Esophagus squamous epithelium (tissue), 5 donors: ENCODE measurements at regions of chr1 and their contacts with region 1.

Region 1: GRCh38 chr1:115138968-115139367 is 49.7 kb upstream of the TSPAN2 start:
- DNase-seq: peak; percentile 16
- H3K4me3 ChIP-seq: no peak overlapping the region
- H3K27ac ChIP-seq: peak overlapping the region in 1 of 4 donors; percentile 5
- H3K4me1 ChIP-seq: peaks cover 0 to 22% (median 0%) of the 10 kb centered on the region in 3 donors
- H3K27me3 ChIP-seq: peaks cover 0 to 13% (median 0%) of the 10 kb centered on the region in 4 donors
- CTCF ChIP-seq: peak; percentile 72 to 94 (median 86)
- POLR2A ChIP-seq: no peak

Region 2: GRCh38 chr1:115179397-115179835 is 40.4 kb after region 1 on chr1:
- intact Hi-C with region 1: no loop called
- DNase-seq: no peak
- H3K4me3 ChIP-seq: no peak overlapping the region
- H3K27ac ChIP-seq: no peak overlapping the region
- H3K4me1 ChIP-seq: peaks cover 0 to 11% (median 0%) of the 10 kb centered on the region in 3 donors
- H3K27me3 ChIP-seq: no peaks in the 10 kb centered on the region
- CTCF ChIP-seq: no peak
- POLR2A ChIP-seq: no peak

Region 3: DNA sequence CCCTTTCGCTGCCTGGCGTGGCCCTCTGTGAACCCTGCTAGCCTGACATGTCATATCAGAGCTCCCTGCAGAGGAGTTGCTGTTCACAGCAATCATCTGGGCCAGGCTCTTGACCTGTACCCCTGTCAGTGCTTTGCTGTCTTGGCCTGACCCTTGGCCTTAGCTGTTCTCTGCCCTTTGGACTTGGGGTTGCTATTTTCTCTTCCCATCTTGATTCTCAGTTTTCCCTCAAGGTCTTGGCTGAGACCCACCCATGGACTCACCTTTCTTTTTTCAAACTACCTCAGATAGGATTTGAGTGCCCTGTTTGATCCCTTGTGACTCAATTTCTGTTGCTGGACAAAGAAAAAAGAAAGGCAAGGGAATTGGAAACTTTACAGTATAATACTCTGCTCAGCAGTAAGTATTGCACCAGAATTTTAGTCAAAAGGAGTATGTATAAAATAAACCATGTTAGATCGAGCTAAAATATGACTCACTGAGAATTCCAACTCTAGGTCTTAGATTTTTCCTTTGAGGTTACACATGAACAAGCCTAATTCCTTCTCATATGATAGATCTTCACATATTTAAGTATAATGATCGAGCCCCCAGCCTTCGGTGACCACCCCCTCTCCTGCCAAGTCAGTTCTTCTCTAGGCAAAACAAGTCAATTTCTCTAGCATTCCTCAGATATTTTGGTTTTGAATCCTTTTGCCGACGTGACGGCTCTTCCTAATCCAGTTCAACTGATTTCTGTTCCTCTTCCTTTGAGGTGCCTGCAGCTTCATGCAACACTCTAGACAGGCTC is 88.6 kb after region 1 on chr1:
- intact Hi-C with region 1: no loop called
- DNase-seq: no peak
- H3K4me3 ChIP-seq: no peak overlapping the region
- H3K27ac ChIP-seq: no peak overlapping the region
- H3K4me1 ChIP-seq: peaks cover 0 to 26% (median 4%) of the 10 kb centered on the region in 3 donors
- H3K27me3 ChIP-seq: no peaks in the 10 kb centered on the region
- CTCF ChIP-seq: no peak
- POLR2A ChIP-seq: no peak

Region 4: GRCh38 chr1:115469703-115470476 is 330.9 kb after region 1 on chr1:
- intact Hi-C with region 1: loop called (anchors 5 kb)
- DNase-seq: no peak
- H3K4me3 ChIP-seq: no peak overlapping the region
- H3K27ac ChIP-seq: no peak overlapping the region
- H3K4me1 ChIP-seq: peaks cover 0 to 19% (median 5%) of the 10 kb centered on the region in 3 donors
- H3K27me3 ChIP-seq: no peaks in the 10 kb centered on the region
- CTCF ChIP-seq: peak; percentile 26 to 86 (median 78)
- POLR2A ChIP-seq: no peak

Region 5: GRCh38 chr1:115595279-115596079 is 456.5 kb after region 1 on chr1:
- intact Hi-C with region 1: loop called (anchors 5 kb)
- DNase-seq: peak; percentile 2
- H3K4me3 ChIP-seq: no peak overlapping the region
- H3K27ac ChIP-seq: no peak overlapping the region
- H3K4me1 ChIP-seq: peaks cover 0 to 5% (median 0%) of the 10 kb centered on the region in 3 donors
- H3K27me3 ChIP-seq: no peaks in the 10 kb centered on the region
- CTCF ChIP-seq: peak; percentile 45 to 94 (median 84)
- POLR2A ChIP-seq: no peak

Region 6: GRCh38 chr1:115748401-115749150 is 609.6 kb after region 1 on chr1:
- intact Hi-C with region 1: no loop called
- DNase-seq: no peak
- H3K4me3 ChIP-seq: no peak overlapping the region
- H3K27ac ChIP-seq: peak overlapping the region in 3 of 4 donors; percentile 5 to 71 (median 49)
- H3K4me1 ChIP-seq: peaks cover 5 to 28% (median 6%) of the 10 kb centered on the region in 3 donors
- H3K27me3 ChIP-seq: no peaks in the 10 kb centered on the region
- CTCF ChIP-seq: no peak
- POLR2A ChIP-seq: no peak